Right lobe of liver (tissue), 6 donors: ENCODE measurements at regions of chr11 and their contacts with region 1.

Region 1: DNA sequence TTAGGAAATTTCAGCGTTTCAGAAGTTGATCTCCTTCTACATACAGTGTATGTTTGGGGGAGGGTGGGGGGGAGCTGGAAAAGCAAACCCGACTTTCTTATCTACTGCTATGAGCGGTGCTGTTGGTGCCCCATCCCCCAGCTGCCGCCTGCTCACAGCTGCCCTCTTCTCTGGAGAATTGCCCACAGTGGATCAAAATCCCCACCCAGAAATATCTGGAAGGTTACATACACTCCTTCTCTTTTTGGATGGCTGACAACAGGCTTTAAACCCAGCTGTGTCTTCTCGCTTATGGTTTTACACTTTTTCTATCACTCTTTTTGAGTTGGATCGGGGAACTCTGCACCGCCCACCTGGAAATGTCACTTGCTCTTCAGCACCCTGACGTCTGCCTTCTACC is 56.4 kb downstream of the DHCR7 start:
- DNase-seq: no peak
- ATAC-seq: no peak
- H3K4me3 ChIP-seq: no peak overlapping the region
- H3K27ac ChIP-seq: no peak overlapping the region
- H3K4me1 ChIP-seq: no peaks in the 10 kb centered on the region
- H3K27me3 ChIP-seq: no peaks in the 10 kb centered on the region
- CTCF ChIP-seq: no peak
- POLR2A ChIP-seq: no peak

Region 2: DNA sequence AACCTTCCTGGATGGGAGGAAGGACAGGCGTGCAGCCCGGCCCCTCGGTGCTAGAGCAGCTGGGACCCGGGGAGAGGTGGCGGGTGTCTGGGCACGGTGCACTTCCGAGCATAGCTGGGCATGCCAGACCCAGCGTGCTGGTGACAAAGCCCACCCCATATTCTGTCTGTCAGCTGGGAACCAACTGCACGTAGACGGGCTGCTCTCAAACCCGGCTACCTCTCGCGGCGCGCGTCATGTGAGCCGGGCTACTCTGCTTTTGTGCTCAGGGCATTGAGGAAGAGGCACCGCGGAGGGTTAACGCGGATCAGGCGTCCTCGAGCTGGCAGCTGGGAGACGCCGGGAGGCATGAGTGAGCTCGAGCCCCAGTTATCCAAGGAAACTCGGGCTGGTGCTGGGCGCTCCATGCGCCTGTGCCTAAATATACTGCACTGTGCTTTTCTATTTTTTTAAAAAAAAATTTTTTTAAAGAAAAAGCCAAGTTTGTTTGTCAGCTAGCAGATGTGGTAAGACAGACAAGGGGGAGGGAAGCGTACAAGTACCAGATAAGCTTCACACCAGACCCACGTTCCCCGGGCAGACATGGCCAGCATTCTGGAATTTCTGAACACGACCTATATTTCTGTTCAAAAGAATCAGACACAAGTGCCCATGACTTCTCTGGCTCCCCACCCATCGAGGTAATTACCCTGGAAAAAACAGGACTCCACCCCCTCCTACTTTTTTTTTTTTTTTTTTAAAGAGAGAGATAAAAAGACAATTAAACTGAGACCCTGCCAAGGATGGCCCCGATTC is 565.1 kb before region 1 on chr11:
- intact Hi-C with region 1: loop called in 1 of 2 experiments (anchors 10 kb)
- DNase-seq: no peak
- ATAC-seq: no peak
- H3K4me3 ChIP-seq: no peak overlapping the region
- H3K27ac ChIP-seq: no peak overlapping the region
- H3K4me1 ChIP-seq: no peaks in the 10 kb centered on the region
- H3K27me3 ChIP-seq: no peaks in the 10 kb centered on the region
- CTCF ChIP-seq: no peak
- POLR2A ChIP-seq: no peak

Region 3: DNA sequence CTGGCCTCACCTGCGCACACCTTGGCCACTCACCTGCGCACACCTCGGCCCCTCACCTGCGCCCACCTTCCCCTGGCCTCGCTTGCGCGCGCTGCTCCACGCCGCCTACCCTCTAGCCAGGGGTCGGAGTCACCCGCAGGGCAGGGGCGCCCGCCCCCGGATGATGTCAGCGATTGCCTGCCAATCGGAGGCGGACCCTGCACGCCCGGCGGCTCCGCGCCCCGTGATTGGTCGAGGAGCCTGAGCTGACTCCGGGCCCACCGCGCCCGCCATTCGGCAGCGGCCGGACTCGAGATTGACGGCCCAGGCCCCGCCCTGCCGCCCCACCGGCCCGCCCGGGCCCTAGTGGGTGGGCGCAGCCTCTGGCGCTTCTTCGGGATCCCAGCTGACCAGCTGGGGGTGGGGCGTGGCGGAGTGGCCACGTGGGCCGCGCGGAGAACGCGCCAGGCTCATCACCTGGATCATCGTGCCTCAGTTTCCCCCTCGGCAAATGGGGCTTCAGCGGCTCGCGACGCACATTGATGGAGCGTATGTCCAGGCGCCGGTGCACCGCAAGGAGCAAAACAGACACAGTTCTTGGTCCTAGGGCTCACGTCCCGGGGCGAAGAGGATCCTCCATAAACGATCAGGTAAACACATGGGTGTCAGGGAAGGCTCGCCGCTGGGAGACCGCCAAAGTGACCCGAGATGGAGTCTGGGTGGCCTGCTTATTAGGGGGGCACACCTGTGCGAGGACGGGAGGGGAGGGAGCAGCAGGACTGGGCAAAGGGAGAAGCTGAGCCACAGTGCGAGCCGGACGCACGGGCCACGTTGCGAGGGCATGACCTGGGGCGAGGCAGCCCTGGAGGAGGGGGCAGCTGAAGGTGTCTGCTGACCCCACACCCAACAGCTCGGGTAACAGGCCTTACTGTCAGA is 56.7 kb after region 1 on chr11 and contains the start of gene DHCR7:
- intact Hi-C with region 1: no loop called
- DNase-seq: peak; percentile 98 to 99 (median 99)
- ATAC-seq: peak; percentile 73 to 87 (median 80)
- H3K4me3 ChIP-seq: peak within 1 kb of the TSS; percentile 72 to 88 (median 72)
- H3K27ac ChIP-seq: peak within 1 kb of the TSS; percentile 69 to 85 (median 84)
- H3K4me1 ChIP-seq: peaks cover 3 to 48% (median 13%) of the 10 kb centered on the region in 4 donors
- H3K27me3 ChIP-seq: no peaks in the 10 kb centered on the region
- CTCF ChIP-seq: peak in 2 of 4 donors; percentile 5 to 8
- POLR2A ChIP-seq: peak; percentile 77
- total RNA-seq, gene DHCR7: 42.0 to 320 (median 126) TPM

Region 4: DNA sequence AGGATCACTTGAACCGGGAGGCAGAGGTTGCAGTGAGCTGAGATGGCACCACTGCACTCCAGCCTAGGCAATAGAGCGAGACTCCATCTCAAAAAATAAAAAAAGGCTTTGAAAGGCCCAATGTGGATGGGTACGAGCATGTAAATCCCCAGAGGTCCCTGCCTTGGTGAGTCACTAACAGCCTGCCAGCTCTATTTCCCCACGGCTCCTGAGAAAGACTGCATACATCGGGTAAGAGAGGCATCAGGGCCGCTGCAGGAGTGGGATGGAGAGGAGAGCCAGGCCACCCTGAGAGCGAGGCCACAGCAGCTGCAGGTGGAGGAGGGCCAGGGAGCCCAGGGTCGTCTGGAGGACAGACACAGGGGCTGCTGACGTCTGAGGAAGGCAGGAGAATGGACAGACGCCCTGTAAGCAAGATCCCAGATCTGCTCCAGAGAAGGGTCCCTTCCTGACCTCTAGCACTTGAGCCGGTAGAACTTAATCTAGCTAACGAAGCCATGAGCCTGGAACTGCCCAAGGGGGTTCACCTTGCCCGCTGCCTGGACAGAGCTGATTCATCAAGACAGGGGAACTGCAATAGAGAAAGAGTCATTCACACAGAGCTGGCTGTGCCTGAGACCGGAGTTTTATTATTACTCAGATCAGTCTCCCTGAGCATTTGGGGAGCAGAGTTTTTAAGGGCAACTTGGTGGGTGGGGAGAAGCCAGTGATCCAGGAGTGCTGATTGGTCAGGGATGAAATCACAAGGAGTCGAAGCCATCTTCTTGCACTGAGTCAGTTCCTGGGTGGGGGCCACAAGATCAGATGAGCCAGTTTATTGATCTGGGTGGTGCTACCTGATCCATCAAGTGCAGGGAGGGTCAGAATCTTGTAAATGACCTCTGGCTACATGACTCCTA is 151.3 kb after region 1 on chr11:
- intact Hi-C with region 1: no loop called
- DNase-seq: no peak
- ATAC-seq: no peak
- H3K4me3 ChIP-seq: no peak overlapping the region
- H3K27ac ChIP-seq: no peak overlapping the region
- H3K4me1 ChIP-seq: no peaks in the 10 kb centered on the region
- H3K27me3 ChIP-seq: no peaks in the 10 kb centered on the region
- CTCF ChIP-seq: no peak
- POLR2A ChIP-seq: no peak

Region 5: DNA sequence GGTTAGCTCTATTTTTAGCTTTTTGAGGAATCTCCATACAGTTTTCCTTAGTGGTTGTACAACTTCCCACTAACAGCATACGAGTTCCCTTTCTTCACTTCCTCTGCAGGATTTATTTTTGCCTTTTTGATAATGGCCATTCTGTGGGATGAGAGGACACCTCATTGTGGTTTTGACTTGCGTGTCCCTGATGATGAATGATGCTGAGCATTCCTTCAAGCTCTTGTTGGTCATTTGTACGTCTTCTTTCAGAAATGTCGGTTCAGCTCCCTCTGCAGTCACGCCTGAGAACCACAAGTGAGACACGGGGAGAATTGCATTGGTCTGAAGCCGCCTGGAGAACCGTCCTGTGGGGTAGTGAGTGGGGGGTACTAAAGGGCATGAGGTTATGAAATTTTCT is 171.6 kb after region 1 on chr11:
- intact Hi-C with region 1: no loop called
- DNase-seq: peak in 2 of 3 donors; percentile 43 to 63
- ATAC-seq: peak; percentile 81 to 91 (median 86)
- H3K4me3 ChIP-seq: no peak overlapping the region
- H3K27ac ChIP-seq: no peak overlapping the region
- H3K4me1 ChIP-seq: no peaks in the 10 kb centered on the region
- H3K27me3 ChIP-seq: no peaks in the 10 kb centered on the region
- CTCF ChIP-seq: peak; percentile 54 to 60 (median 56)
- POLR2A ChIP-seq: no peak